Activated B cell treated with CpG ODN at 0.5 μM for 24 hours (primary cell): ENCODE measurements at regions of chr9 and their contacts with region 1.

Region 1: DNA sequence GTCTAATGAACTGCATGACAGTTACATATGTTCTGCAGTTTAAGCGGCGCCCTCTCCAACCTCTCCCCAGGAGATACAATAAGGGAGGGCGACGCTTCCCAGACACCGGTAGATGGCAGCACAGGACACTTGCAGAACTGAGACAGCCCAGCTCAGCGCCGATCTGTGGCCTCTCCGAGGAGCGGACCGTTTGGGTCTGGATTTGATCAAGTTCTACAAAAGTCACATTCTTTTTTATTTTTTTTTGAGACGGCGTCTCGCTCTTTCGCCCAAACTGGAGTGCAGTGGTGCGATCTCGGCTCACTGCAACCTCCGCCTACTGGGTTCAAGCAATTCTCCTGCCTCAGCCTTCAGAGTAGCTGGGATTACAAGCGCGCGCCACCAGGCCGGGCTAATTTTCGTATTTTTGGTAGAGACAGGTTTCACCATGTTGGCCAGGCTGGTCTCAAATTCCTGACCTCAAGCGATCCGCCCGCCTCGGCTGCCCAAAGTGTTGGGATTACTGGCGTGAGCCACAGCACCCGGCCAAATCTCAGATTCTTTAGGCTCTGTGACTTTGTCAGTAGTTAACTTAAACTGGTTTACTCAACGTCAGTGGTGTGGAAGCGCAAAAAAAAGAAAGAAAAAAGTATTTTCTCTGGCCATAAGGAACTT is 1.4 kb upstream of the ATOSB start:
- DNase-seq: peak; percentile 60
- ATAC-seq: peak; percentile 62
- H3K4me3 Mint-ChIP-seq: peak overlapping the region; percentile 96
- H3K27ac Mint-ChIP-seq: peak overlapping the region; percentile 94
- H3K4me1 Mint-ChIP-seq: peaks cover 43% of the 10 kb centered on the region
- H3K27me3 Mint-ChIP-seq: no peaks in the 10 kb centered on the region
- CTCF ChIP-seq: peak; percentile 71

Region 2: DNA sequence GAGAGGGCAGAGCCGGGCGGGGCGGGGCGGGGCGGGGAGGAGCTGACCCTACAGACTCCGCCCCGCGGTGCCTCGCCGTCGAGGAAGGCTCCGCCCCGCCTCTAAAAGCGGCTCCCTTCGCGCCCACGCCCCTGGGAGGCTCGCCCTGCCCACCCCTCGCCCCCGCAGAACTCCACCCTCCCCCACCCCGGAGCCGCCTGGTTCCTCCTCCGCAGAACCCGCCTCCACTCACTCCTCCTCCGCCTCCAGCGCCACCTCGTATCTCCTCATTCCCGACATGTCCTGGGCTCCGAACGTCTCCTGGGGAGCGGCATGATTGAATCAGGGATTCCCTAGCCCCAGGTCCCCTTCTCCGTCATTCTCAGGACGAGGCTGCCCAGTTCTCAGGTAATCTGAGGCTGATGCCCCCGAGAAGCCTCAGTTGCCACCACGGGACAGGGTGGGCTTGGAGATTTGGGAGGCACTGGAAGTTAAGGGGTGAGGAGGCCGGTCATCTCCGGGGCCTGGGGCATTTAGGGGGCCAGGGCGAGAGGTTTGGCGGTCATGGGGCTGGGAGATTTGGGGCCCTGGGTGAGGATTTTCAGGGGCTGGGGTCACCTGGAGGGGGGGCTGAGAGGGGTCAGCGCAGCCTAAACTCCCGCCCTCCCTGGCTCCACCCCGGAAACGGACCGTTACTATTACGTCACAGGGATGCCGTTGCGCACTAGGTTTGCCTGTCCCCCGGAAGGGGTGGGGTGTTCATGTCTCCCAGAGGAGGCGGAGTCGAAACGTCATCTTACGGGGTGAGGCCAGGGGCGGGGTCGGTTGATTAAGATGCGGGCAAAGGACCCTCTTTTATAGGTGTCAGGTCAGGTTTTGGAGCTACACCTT is 451.4 kb before region 1 on chr9:
- CTCF ChIA-PET with region 1: no interaction called
- POLR2A ChIA-PET with region 1: no interaction called
- intact Hi-C with region 1: loop called (anchors 2 kb)
- DNase-seq: peak; percentile 75
- ATAC-seq: peak; percentile 90
- H3K4me3 Mint-ChIP-seq: peak overlapping the region; percentile 88
- H3K27ac Mint-ChIP-seq: peak overlapping the region; percentile 87
- H3K4me1 Mint-ChIP-seq: peaks cover 11% of the 10 kb centered on the region
- H3K27me3 Mint-ChIP-seq: no peaks in the 10 kb centered on the region
- CTCF ChIP-seq: no peak

Region 3: GRCh38 chr9:35071814-35072460 is 45.1 kb before region 1 on chr9:
- CTCF ChIA-PET with region 1: no interaction called
- POLR2A ChIA-PET with region 1: interaction called, 47 read pairs
- intact Hi-C with region 1: loop called (anchors 1 kb)
- DNase-seq: peak; percentile 80
- ATAC-seq: peak; percentile 63
- H3K4me3 Mint-ChIP-seq: peak overlapping the region; percentile 89
- H3K27ac Mint-ChIP-seq: peak overlapping the region; percentile 93
- H3K4me1 Mint-ChIP-seq: peaks cover 51% of the 10 kb centered on the region
- H3K27me3 Mint-ChIP-seq: no peaks in the 10 kb centered on the region
- CTCF ChIP-seq: no peak

Region 4: DNA sequence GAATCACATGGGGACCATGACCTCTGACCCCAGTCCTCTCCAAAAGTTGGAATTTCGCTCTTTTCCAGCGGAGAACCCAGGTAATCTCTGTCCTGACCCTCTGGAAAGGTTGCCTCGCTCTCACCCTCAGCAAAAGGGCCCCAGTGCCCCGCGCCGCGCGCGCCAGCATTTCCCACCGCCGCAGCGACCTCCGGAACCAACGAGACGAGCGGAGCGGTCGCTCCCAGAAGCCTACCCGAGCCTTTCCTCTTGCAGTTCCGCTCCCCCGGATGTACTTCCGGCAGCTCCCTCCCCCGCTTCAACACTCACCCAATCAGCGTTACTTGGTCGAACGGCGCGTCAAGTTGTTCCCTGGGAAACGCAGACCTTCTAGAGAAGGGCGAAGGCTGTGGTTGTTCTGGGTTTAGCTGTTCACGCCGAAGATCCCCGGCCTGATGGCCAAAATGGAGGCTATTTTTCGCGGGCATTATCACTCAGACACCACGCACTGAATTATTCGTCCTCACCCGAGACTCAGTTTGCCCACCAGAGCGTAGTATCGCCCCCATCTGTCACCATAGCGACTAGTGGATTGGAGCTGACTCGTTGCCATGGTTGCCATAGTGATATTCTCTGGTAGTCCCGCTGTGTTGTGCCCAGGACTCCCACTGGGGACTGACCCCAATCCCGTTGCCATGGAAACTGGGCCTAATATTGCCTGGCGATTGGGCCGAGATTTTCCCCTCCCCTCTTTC is 13.9 kb before region 1 on chr9 and contains the start of gene STOML2:
- CTCF ChIA-PET with region 1: no interaction called
- POLR2A ChIA-PET with region 1: interaction called, 38 read pairs
- intact Hi-C with region 1: loop called (anchors 1 kb)
- DNase-seq: peak; percentile 82
- ATAC-seq: peak; percentile 97
- H3K4me3 Mint-ChIP-seq: peak within 1 kb of the TSS; percentile 97
- H3K27ac Mint-ChIP-seq: peak within 1 kb of the TSS; percentile 97
- H3K4me1 Mint-ChIP-seq: peaks cover 25% of the 10 kb centered on the region
- H3K27me3 Mint-ChIP-seq: no peaks in the 10 kb centered on the region
- CTCF ChIP-seq: no peak
- total RNA-seq, gene STOML2: 108 and 113 TPM in 2 replicates

Region 5: GRCh38 chr9:35415386-35416096 is 298.5 kb after region 1 on chr9:
- CTCF ChIA-PET with region 1: interaction called, 5 read pairs
- POLR2A ChIA-PET with region 1: no interaction called
- intact Hi-C with region 1: loop called (anchors 2 kb)
- DNase-seq: no peak
- ATAC-seq: no peak
- H3K4me3 Mint-ChIP-seq: no peak overlapping the region
- H3K27ac Mint-ChIP-seq: no peak overlapping the region
- H3K4me1 Mint-ChIP-seq: no peaks in the 10 kb centered on the region
- H3K27me3 Mint-ChIP-seq: peaks cover 37% of the 10 kb centered on the region
- CTCF ChIP-seq: no peak

Region 6: DNA sequence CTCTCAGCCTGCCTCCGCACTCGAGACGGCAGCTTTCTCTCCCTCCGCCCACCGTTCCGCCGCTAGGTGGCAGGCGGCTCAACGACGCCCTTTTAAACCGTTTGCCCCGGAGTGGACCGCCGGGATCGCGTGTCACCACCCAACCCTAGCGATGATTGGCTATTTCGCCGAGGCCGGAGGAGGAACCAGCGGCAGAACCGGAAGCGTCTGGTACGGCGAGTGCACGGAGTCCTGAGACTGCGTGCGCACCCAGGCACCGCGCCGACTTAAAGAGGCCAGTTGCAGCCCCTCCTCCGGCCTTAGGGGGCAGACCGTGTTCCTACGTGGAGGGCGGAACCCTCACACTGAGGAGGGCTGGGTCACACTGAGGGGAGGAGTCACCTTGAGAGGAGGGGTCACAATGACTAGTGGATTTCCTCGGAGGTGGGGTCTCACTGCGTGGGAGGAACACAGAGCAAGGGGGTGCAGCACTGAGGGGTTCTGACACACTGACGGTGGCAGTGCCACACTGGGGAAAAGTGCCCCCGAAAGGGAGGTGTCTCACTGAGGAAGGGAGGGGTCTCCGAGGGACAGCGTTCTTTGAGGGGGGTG is 487.1 kb after region 1 on chr9:
- CTCF ChIA-PET with region 1: interaction called, 3 read pairs
- POLR2A ChIA-PET with region 1: interaction called, 3 read pairs
- intact Hi-C with region 1: loop called (anchors 1 kb)
- DNase-seq: peak; percentile 95
- ATAC-seq: peak; percentile 90
- H3K4me3 Mint-ChIP-seq: peak overlapping the region; percentile 97
- H3K27ac Mint-ChIP-seq: peak overlapping the region; percentile 97
- H3K4me1 Mint-ChIP-seq: peaks cover 37% of the 10 kb centered on the region
- H3K27me3 Mint-ChIP-seq: no peaks in the 10 kb centered on the region
- CTCF ChIP-seq: peak; percentile 76

Region 7: GRCh38 chr9:36036780-36037548 is 919.9 kb after region 1 on chr9 and contains the start of gene RECK:
- CTCF ChIA-PET with region 1: no interaction called
- POLR2A ChIA-PET with region 1: no interaction called
- intact Hi-C with region 1: loop called (anchors 10 kb)
- DNase-seq: peak; percentile 87
- ATAC-seq: peak; percentile 97
- H3K4me3 Mint-ChIP-seq: peak within 1 kb of the TSS; percentile 92
- H3K27ac Mint-ChIP-seq: no peak within 1 kb of the TSS
- H3K4me1 Mint-ChIP-seq: peaks cover 37% of the 10 kb centered on the region
- H3K27me3 Mint-ChIP-seq: peaks cover 4% of the 10 kb centered on the region
- CTCF ChIP-seq: no peak
- total RNA-seq, gene RECK: 4.2 and 5.0 TPM in 2 replicates